GM12878 (cell line): ENCODE measurements at regions of chr3 and their contacts with region 1.

Region 1: DNA sequence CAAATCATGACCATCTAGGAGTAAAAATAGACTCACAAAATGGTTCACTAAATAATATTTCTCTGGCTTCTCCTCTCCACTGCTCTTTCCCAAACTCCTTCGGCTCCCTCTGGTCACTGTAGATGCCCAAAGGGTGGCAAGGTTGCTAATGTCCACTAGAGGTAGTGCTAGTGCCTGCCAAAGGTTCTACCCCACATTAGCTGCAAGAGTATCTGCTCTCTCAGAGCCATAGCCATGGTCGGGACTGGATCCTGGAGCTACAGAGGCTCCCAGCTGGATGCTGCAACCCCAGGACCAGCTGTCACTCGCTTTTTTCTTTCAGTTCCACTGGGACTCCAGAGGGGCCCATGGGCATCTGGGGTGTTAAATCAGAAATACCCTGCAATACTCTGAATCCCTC is 8.5 kb downstream of the HTR3D start:
- DNase-seq: no peak
- ATAC-seq: peak; percentile 54; the same call in 2 of the 3 replicates
- H3K4me3 ChIP-seq: no peak overlapping the region
- H3K27ac ChIP-seq: no peak overlapping the region
- H3K4me1 ChIP-seq: no peaks in the 10 kb centered on the region
- H3K27me3 ChIP-seq: peaks cover 0 to 3% of the 10 kb centered on the region in 2 experiments; a peak in 1 of 4 replicates
- CTCF ChIP-seq: peak in 1 of 3 experiments; percentile 18; a peak in 1 of 6 replicates
- EP300 ChIP-seq: no peak
- POLR2A ChIP-seq: no peak
- RAD21 ChIP-seq: peak; percentile 7; the same call in 1 of the 2 replicates

Region 2: DNA sequence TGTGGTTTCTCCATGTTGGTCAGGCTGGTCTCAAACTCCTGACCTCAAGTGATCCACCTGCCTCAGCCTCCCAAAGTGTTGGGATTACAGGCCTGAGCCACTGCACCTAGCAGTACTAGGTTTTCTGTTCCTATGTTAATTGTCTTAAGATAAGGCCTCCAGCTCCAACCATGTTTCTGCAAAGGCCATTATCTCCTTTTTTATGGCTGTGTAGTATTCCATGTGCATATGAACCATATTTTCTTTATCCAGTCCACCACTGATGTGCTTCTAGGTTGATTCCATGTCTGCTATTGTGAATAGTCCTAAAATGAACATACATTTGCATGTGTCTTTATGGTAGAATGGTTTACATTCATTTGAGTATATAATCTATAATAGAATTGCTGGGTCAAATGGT is 22.6 kb after region 1 on chr3:
- CTCF ChIA-PET with region 1: interaction called, 4 read pairs
- POLR2A ChIA-PET with region 1: no interaction called
- RAD21 ChIA-PET with region 1: no interaction called
- SMC1A ChIA-PET with region 1: no interaction called
- in situ Hi-C with region 1: no loop called
- intact Hi-C with region 1: loop called (anchors 1 kb)
- DNase-seq: no peak
- ATAC-seq: no peak
- H3K4me3 ChIP-seq: no peak overlapping the region
- H3K27ac ChIP-seq: no peak overlapping the region
- H3K4me1 ChIP-seq: no peaks in the 10 kb centered on the region
- H3K27me3 ChIP-seq: no peaks in the 10 kb centered on the region; a peak in 1 of 4 replicates
- CTCF ChIP-seq: no peak
- EP300 ChIP-seq: no peak
- POLR2A ChIP-seq: no peak
- RAD21 ChIP-seq: no peak